PC-3 (cell line): ENCODE measurements at regions of chr3 and their contacts with region 1.

Region 1: GRCh38 chr3:137524751-137525150 is 239.4 kb upstream of the SOX14 start:
- DNase-seq: no peak
- ATAC-seq: no peak
- H3K4me3 ChIP-seq: no peak overlapping the region
- H3K27ac ChIP-seq: no peak overlapping the region
- H3K4me1 ChIP-seq: no peaks in the 10 kb centered on the region
- H3K27me3 ChIP-seq: no peaks in the 10 kb centered on the region
- CTCF ChIP-seq: no peak

Region 2: GRCh38 chr3:137171829-137172603 is 352.7 kb before region 1 on chr3:
- CTCF ChIA-PET with region 1: no interaction called
- POLR2A ChIA-PET with region 1: interaction called, 28 read pairs
- intact Hi-C with region 1: no loop called
- DNase-seq: no peak
- ATAC-seq: no peak
- H3K4me3 ChIP-seq: no peak overlapping the region
- H3K27ac ChIP-seq: no peak overlapping the region
- H3K4me1 ChIP-seq: no peaks in the 10 kb centered on the region
- H3K27me3 ChIP-seq: no peaks in the 10 kb centered on the region; the same call in 1 of the 2 replicates
- CTCF ChIP-seq: no peak

Region 3: DNA sequence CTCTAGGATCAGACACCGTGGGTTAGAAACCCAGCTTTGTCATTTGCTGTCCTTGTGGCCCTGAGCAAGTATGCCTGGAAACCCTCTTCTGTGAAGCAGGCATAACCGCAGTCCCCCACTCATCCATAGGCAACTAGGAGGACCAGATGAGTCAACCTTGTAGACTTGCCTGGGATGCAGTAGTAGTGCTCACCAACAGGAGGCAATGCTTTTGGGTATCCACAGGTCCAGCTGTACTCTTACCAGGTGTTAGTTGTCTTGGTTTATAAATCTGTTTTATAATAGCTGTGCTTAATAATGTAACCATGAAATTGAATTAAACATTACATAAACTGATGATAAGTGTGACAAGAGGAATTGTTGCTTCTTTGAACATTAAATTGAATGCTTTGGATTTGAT is 177.6 kb before region 1 on chr3:
- CTCF ChIA-PET with region 1: no interaction called
- POLR2A ChIA-PET with region 1: no interaction called
- intact Hi-C with region 1: no loop called
- DNase-seq: no peak
- ATAC-seq: no peak
- H3K4me3 ChIP-seq: no peak overlapping the region
- H3K27ac ChIP-seq: no peak overlapping the region
- H3K4me1 ChIP-seq: no peaks in the 10 kb centered on the region
- H3K27me3 ChIP-seq: no peaks in the 10 kb centered on the region
- CTCF ChIP-seq: no peak